ENCODE measurements at regions of chr14 and their contacts with region 1.

Region 1: GRCh38 chr14:75577729-75578101 is 705 bp upstream of the FLVCR2 start:
- DNase-seq: peak; percentile 87
- ATAC-seq: peak; percentile 89
- H3K4me3 ChIP-seq: peak overlapping the region; percentile 82
- H3K27ac ChIP-seq: no peak overlapping the region
- H3K4me1 ChIP-seq: peaks cover 9% of the 10 kb centered on the region
- H3K27me3 ChIP-seq: no peaks in the 10 kb centered on the region
- CTCF ChIP-seq: peak; percentile 86

Region 2: DNA sequence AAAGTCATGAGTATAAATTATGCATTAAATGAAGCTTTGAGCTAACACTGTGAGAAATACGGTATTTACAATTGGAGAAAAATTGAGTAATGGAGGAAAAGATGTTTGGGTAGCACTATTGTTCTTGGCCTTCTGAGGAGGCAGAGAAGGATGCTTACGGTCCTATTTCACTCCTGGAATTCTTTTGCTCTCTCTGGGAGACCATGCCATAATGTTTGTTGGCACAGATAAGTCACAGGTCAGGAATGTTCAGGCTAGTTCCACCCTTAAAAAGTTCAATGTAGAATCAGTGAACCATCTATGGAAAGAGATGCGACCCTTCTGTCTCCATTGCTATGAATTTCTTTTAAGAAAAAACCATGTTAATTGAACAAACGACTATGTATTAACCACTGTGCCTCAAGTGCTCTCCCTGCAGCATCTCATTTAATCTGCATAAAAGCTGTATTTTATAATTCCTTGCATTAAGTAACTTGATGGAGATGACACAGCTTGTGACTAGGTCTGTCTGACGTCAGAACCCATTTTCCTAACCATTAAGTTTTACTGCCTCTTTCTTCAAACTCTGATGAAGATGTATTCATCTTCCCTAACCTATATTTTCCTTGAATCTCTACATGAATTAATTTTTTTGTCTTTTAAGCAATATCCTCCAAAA is 45.9 kb before region 1 on chr14:
- CTCF ChIA-PET with region 1: no interaction called
- POLR2A ChIA-PET with region 1: no interaction called
- intact Hi-C with region 1: no loop called
- DNase-seq: peak; percentile 54
- ATAC-seq: no peak
- H3K4me3 ChIP-seq: no peak overlapping the region
- H3K27ac ChIP-seq: no peak overlapping the region
- H3K4me1 ChIP-seq: peaks cover 22% of the 10 kb centered on the region
- H3K27me3 ChIP-seq: no peaks in the 10 kb centered on the region
- CTCF ChIP-seq: no peak

Region 3: DNA sequence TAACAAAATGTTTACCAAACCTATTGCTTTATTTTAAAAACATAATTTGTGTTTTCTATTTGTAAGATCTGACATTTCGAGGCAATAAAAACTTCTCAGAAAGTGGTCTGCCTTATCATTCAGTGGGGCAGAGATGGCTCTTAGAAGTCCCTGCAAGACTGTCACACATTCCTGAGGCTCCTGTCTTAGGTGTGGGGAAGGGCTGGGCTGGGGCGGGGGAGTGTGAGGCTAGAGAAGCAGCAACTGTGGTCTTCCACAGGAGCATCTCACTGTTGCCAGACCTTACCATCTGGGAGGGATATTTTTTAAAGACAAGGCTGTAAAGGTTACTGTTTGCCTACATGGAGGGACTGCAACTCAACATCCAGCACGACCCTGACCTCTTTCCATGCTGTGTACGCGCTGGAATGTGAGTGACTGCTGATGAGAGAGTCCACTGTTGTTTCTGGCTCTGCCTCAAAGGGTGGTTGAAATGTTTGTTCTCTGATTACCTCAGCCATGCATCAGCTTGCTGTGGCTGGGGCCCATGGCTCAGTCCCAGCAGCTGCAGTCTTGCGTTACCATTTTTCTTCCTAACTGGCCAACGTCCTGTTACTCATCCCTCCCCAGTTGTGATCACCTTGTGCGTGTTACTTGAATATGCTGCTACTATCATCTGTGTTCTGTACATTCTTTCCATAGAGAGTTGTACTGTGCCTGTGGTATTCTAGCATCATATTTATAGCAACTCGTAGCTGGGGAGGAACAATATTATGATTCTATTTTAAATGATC is 70.5 kb after region 1 on chr14:
- CTCF ChIA-PET with region 1: interaction called, 7 read pairs
- POLR2A ChIA-PET with region 1: no interaction called
- intact Hi-C with region 1: loop called (anchors 1 kb)
- DNase-seq: peak; percentile 97
- ATAC-seq: peak; percentile 92
- H3K4me3 ChIP-seq: no peak overlapping the region
- H3K27ac ChIP-seq: peak overlapping the region; percentile 66
- H3K4me1 ChIP-seq: peaks cover 46% of the 10 kb centered on the region
- H3K27me3 ChIP-seq: no peaks in the 10 kb centered on the region
- CTCF ChIP-seq: no peak

Region 4: DNA sequence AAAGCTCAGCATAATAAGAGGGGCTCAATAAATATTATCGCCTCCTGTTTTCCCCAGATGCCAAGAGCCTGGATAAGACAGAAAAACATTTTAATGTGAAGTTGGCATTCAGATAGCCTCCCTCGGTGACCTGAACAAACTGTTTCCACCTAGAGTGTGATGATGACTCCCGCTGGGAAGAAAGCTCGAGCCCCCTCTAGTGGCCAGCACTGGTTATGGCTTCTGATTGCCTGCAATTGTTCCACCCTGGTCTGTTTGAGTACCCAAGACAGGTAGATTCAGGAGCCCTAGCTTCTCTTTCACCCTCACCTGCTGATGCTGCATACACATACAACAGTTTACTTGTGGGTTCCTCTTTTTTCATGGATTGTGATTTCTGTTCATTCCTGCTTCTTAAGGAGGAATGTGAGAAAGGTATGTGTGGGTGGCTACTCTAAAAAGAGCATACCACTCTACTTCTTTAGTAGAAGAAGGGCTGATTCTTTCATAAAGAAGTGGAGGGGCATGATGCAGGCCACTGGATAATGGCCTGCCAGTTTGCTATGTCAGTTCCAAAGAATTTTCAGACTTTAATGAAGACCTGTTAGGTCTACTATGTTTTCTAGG is 76.5 kb after region 1 on chr14:
- CTCF ChIA-PET with region 1: interaction called, 30 read pairs
- POLR2A ChIA-PET with region 1: interaction called, 3 read pairs
- intact Hi-C with region 1: loop called (anchors 1 kb)
- DNase-seq: peak; percentile 87
- ATAC-seq: peak; percentile 95
- H3K4me3 ChIP-seq: no peak overlapping the region
- H3K27ac ChIP-seq: no peak overlapping the region
- H3K4me1 ChIP-seq: peaks cover 12% of the 10 kb centered on the region
- H3K27me3 ChIP-seq: no peaks in the 10 kb centered on the region
- CTCF ChIP-seq: peak; percentile 96

Measured in PC-3 (cell line).